A673 (cell line): ENCODE measurements at regions of chr12 and their contacts with region 1.

Region 1: GRCh38 chr12:6465467-6466183 is 4.9 kb downstream of the VAMP1 start:
- DNase-seq: peak; percentile 79
- H3K4me3 ChIP-seq: no peak overlapping the region
- H3K27ac ChIP-seq: no peak overlapping the region
- H3K4me1 ChIP-seq: peaks cover 9% of the 10 kb centered on the region
- H3K27me3 ChIP-seq: no peaks in the 10 kb centered on the region
- CTCF ChIP-seq: peak; percentile 82

Region 2: DNA sequence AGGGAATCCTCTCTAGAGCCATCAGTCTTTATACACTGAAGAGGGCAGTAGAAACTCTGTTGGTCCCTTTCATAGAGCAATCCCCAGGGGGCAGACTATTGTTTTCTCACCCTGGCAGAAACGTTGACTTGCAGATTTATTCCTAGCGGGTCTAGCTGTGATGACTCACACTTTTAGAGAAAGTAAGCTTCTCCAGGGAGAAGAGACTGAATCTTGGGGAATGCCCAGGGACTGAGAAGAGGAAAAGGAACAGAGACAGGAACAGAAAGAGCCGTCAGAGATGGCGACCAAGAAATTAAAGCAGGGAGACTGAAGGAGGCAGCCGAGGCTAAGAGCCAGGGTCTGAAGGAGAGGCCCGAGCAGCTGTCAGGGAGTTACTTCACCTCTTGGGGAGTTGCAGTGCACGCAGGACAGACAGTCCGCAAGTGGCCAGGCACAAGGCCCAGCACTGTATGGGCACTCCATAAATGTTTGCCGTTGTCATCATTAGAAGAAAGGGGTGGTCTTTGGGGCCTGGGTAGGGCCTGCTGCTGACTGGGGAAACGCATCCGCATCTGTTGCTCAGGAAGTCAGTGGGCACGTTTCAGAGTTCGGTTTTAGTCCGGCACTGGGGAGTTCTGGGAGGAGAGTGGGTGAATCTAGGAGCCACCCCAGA is 142.2 kb before region 1 on chr12:
- CTCF ChIA-PET with region 1: interaction called, 5 read pairs
- POLR2A ChIA-PET with region 1: no interaction called
- intact Hi-C with region 1: loop called (anchors 5 kb)
- DNase-seq: peak; percentile 98
- H3K4me3 ChIP-seq: no peak overlapping the region
- H3K27ac ChIP-seq: peak overlapping the region; percentile 82
- H3K4me1 ChIP-seq: peaks cover 28% of the 10 kb centered on the region
- H3K27me3 ChIP-seq: no peaks in the 10 kb centered on the region
- CTCF ChIP-seq: peak; percentile 59

Region 3: GRCh38 chr12:6423267-6424007 is 42.2 kb before region 1 on chr12:
- CTCF ChIA-PET with region 1: interaction called, 15 read pairs
- POLR2A ChIA-PET with region 1: interaction called, 3 read pairs
- intact Hi-C with region 1: loop called (anchors 1 kb)
- DNase-seq: peak; percentile 96
- H3K4me3 ChIP-seq: no peak overlapping the region
- H3K27ac ChIP-seq: no peak overlapping the region
- H3K4me1 ChIP-seq: no peaks in the 10 kb centered on the region
- H3K27me3 ChIP-seq: no peaks in the 10 kb centered on the region
- CTCF ChIP-seq: peak; percentile 89